ENCODE measurements at regions of chr16 and their contacts with region 1.

Region 1: DNA sequence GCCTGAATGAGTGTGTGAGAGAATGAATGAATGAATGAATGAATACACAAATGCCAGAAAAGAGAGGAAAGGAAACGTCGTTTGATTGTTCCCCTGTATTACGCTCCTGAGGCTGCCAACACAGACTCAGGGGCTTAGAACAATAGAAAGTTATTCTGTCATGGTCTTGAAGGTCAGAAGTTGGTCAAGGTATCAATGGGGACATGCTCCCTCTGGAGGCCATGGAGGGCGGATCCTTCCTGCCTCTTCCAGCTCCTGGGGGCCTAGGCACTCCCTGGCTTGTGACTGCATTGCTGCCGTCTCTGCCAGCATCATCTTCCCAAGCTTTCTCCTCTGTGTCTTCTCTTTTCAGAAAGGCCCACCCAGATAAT is 1.5 kb upstream of the SLC38A8 start:
- DNase-seq: peak; percentile 73
- ATAC-seq: peak; percentile 72
- H3K4me3 ChIP-seq: no peak overlapping the region
- H3K27ac ChIP-seq: no peak overlapping the region
- H3K4me1 ChIP-seq: peaks cover 37% of the 10 kb centered on the region
- H3K27me3 ChIP-seq: peaks cover 2 to 38% of the 10 kb centered on the region in 2 experiments; a peak in 3 of 5 replicates
- CTCF ChIP-seq: peak; percentile 80
- EP300 ChIP-seq: no peak
- POLR2A ChIP-seq: no peak
- RAD21 ChIP-seq: peak; percentile 61

Region 2: GRCh38 chr16:83826146-83826913 is 217.8 kb before region 1 on chr16:
- CTCF ChIA-PET with region 1: no interaction called
- POLR2A ChIA-PET with region 1: no interaction called
- in situ Hi-C with region 1: loop called (anchors 10 kb)
- intact Hi-C with region 1: no loop called
- DNase-seq: peak; percentile 52
- ATAC-seq: peak; percentile 92
- H3K4me3 ChIP-seq: peak overlapping the region in 1 of 3 experiments; percentile 3; a peak in 1 of 6 replicates
- H3K27ac ChIP-seq: no peak overlapping the region
- H3K4me1 ChIP-seq: no peaks in the 10 kb centered on the region
- H3K27me3 ChIP-seq: peaks cover 4 to 59% of the 10 kb centered on the region in 2 experiments; a peak in 3 of 5 replicates
- CTCF ChIP-seq: peak; percentile 97
- EP300 ChIP-seq: no peak
- POLR2A ChIP-seq: no peak
- RAD21 ChIP-seq: peak; percentile 91

Region 3: GRCh38 chr16:83971165-83972130 is 72.7 kb before region 1 on chr16:
- CTCF ChIA-PET with region 1: interaction called, 7 read pairs
- POLR2A ChIA-PET with region 1: interaction called, 4 read pairs
- in situ Hi-C with region 1: no loop called
- intact Hi-C with region 1: loop called (anchors 5 kb)
- DNase-seq: no peak
- ATAC-seq: peak; percentile 9
- H3K4me3 ChIP-seq: peak overlapping the region in 1 of 3 experiments; percentile 13; a peak in 1 of 6 replicates
- H3K27ac ChIP-seq: no peak overlapping the region
- H3K4me1 ChIP-seq: peaks cover 17% of the 10 kb centered on the region
- H3K27me3 ChIP-seq: peaks cover 5 to 48% of the 10 kb centered on the region in 2 experiments; a peak in 4 of 5 replicates
- CTCF ChIP-seq: no peak
- EP300 ChIP-seq: no peak
- POLR2A ChIP-seq: no peak
- RAD21 ChIP-seq: no peak

Region 4: GRCh38 chr16:83994087-83994486 is 50.0 kb before region 1 on chr16:
- CTCF ChIA-PET with region 1: no interaction called
- POLR2A ChIA-PET with region 1: no interaction called
- in situ Hi-C with region 1: no loop called
- intact Hi-C with region 1: loop called (anchors 1 kb)
- DNase-seq: peak; percentile 75
- ATAC-seq: peak; percentile 10; the same call in 2 of the 3 replicates
- H3K4me3 ChIP-seq: no peak overlapping the region
- H3K27ac ChIP-seq: no peak overlapping the region
- H3K4me1 ChIP-seq: peaks cover 25% of the 10 kb centered on the region
- H3K27me3 ChIP-seq: peaks cover 2 to 22% of the 10 kb centered on the region in 2 experiments; a peak in 4 of 5 replicates
- CTCF ChIP-seq: no peak
- EP300 ChIP-seq: peak in 1 of 2 experiments; percentile 52; a peak in 2 of 4 replicates
- POLR2A ChIP-seq: no peak
- RAD21 ChIP-seq: no peak

Region 5: DNA sequence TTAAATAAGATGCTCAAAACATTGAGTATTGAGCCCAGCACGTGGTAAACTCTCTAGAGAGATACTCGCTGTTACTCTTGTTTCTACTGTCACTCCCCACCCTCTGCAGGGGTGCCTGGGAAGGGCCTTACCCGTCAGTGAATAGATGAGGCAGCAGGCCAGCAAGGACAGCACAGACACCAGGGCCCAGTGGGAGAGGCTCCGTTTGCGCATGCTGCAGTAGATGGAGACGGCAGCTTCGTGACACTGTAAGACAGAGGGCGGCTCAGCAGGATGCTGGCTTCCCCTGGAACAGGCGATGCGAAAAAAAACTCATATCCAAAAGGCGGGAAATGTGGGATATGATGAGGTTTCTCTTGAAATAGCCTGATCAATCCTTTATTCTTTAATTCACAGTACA is 21.5 kb before region 1 on chr16:
- CTCF ChIA-PET with region 1: no interaction called
- POLR2A ChIA-PET with region 1: no interaction called
- in situ Hi-C with region 1: no loop called
- intact Hi-C with region 1: no loop called
- DNase-seq: no peak
- ATAC-seq: 0 out of 3 replicates have a peak, but pooled peaks have one; percentile 8
- H3K4me3 ChIP-seq: no peak overlapping the region
- H3K27ac ChIP-seq: no peak overlapping the region
- H3K4me1 ChIP-seq: peaks cover 61% of the 10 kb centered on the region
- H3K27me3 ChIP-seq: no peaks in the 10 kb centered on the region
- CTCF ChIP-seq: no peak
- EP300 ChIP-seq: no peak
- POLR2A ChIP-seq: no peak
- RAD21 ChIP-seq: no peak

Region 6: GRCh38 chr16:84055366-84055765 is 11.3 kb after region 1 on chr16:
- CTCF ChIA-PET with region 1: no interaction called
- POLR2A ChIA-PET with region 1: no interaction called
- in situ Hi-C with region 1: no loop called
- intact Hi-C with region 1: no loop called
- DNase-seq: no peak
- ATAC-seq: no peak
- H3K4me3 ChIP-seq: no peak overlapping the region
- H3K27ac ChIP-seq: no peak overlapping the region
- H3K4me1 ChIP-seq: no peaks in the 10 kb centered on the region
- H3K27me3 ChIP-seq: no peaks in the 10 kb centered on the region
- CTCF ChIP-seq: no peak
- EP300 ChIP-seq: no peak
- POLR2A ChIP-seq: no peak
- RAD21 ChIP-seq: no peak

Region 7: DNA sequence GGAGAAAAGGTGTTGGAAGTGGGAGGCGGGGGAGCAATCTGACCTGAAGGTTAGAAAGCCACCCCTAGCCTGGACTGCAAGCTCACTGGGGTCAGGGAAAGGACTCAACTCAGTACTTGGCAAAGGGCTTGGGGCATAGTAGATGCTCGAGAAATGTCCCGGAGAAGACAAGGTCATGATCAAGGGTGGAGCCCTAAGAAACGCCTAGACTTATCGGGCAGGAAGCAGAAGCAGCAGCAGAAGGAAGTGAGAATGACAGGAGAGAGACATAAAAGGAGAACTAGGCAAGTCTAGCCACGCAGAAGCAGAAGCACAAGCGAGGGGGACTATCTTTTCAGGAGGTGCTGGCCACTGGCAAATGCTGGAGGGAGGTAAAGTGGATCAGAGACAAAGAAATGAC is 563.6 kb after region 1 on chr16:
- CTCF ChIA-PET with region 1: no interaction called
- POLR2A ChIA-PET with region 1: no interaction called
- in situ Hi-C with region 1: no loop called
- intact Hi-C with region 1: no loop called
- DNase-seq: no peak
- ATAC-seq: no peak
- H3K4me3 ChIP-seq: no peak overlapping the region
- H3K27ac ChIP-seq: no peak overlapping the region
- H3K4me1 ChIP-seq: peaks cover 19% of the 10 kb centered on the region
- H3K27me3 ChIP-seq: no peaks in the 10 kb centered on the region
- CTCF ChIP-seq: no peak
- EP300 ChIP-seq: no peak
- POLR2A ChIP-seq: no peak
- RAD21 ChIP-seq: no peak

Measured in HepG2 (cell line).